MCF 10A (cell line): ENCODE measurements at regions of chr15 and their contacts with region 1.

Region 1: DNA sequence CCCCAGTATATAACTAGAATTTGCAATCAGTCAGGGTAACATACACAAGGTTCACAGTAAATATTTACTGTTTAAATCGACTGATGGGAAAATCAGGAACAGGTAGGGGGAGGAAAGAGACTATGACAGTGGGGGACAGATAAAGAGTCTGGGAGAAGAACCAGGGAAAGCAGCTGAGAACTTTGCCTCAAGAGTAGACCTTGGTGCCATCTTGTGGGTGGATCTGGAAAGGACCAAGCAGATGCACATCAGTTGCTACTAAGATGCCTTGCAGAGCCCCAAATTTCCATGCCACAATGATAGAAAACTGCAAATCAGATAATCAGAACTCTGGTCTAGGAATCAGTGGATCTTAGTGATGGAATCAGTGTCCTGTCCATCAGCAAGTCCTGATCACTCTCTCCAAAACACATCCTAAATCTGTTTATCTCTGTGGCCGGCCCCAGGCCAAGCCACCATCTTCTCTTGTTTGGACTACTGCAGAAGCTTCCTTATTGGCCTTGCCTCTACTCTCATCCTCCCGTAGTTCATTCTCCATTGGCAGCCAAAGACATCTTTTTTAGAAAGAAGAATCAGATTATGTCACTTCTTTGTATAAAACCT is 62.7 kb downstream of the PDE8A start:
- DNase-seq: peak; percentile 75
- H3K4me3 Mint-ChIP-seq: no peak overlapping the region
- H3K27ac Mint-ChIP-seq: no peak overlapping the region
- H3K4me1 Mint-ChIP-seq: peaks cover 17% of the 10 kb centered on the region
- H3K27me3 Mint-ChIP-seq: no peaks in the 10 kb centered on the region
- CTCF ChIP-seq: peak; percentile 66

Region 2: DNA sequence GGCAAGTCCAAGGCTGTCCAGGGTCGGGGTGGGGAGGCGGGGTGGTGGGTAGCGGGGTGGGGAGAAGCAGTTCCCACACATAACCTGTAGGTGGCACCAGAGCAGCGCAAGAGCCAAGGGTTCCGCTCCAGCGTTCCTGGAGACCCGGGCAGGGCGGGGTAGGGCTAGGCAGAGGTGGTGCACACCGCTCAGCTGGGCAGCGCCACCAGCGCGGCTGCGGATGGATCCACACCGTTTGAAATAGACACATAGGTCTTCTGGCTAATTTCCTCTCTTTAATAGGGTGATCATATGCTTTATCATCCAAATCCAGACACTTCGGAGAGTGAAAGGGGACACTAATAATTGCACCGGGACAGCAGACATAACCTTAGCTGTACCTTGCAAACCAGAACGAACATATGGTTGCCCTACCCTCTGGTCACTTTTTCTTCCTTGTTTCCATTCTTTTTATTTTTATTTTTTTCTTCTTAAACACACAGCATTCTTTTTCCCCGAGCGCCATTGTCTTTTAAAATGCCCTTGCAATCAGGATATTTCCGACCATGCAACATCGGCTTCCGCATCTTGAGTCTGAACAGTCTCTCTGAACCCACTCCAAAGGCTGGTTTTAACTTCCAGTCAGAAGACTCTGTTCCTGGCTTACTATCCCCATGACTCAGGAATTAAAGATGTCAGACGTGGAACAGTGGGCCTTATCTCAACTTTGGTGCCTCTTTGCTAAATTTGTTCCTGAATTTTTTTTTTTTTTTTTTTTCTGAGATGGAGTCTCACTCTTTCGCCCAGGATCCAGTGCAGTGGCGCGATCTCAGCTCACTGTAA is 456.1 kb before region 1 on chr15:
- CTCF ChIA-PET with region 1: interaction called, 4 read pairs
- POLR2A ChIA-PET with region 1: no interaction called
- intact Hi-C with region 1: loop called (anchors 5 kb)
- DNase-seq: peak; percentile 87
- H3K4me3 Mint-ChIP-seq: peak overlapping the region; percentile 59
- H3K27ac Mint-ChIP-seq: peak overlapping the region; percentile 76
- H3K4me1 Mint-ChIP-seq: peaks cover 6% of the 10 kb centered on the region
- H3K27me3 Mint-ChIP-seq: peaks cover 12% of the 10 kb centered on the region
- CTCF ChIP-seq: peak; percentile 95

Region 3: DNA sequence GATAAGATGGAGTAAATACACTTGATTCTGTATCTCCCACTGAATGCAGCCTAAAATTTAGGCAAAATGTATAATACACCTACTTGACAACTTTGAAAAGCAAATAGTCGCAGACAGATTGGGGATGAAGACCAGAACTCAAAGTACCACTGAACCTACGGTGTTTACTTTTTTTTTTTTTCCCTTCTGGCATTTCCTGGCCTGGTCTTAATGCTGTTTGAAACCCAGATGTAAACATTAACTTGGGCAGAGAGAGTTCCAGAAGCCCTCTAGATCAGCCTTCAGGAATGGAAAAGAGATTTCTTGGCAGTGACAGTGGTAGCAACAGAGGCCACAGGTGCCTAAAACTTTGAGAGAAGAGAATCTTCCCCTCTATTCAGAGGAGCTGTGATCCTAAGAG is 199.4 kb before region 1 on chr15:
- CTCF ChIA-PET with region 1: interaction called, 3 read pairs
- POLR2A ChIA-PET with region 1: no interaction called
- intact Hi-C with region 1: loop called (anchors 5 kb)
- DNase-seq: no peak
- H3K4me3 Mint-ChIP-seq: no peak overlapping the region
- H3K27ac Mint-ChIP-seq: no peak overlapping the region
- H3K4me1 Mint-ChIP-seq: no peaks in the 10 kb centered on the region
- H3K27me3 Mint-ChIP-seq: peaks cover 16% of the 10 kb centered on the region
- CTCF ChIP-seq: no peak

Region 4: GRCh38 chr15:84949845-84950569 is 94.3 kb before region 1 on chr15:
- CTCF ChIA-PET with region 1: interaction called, 50 read pairs
- POLR2A ChIA-PET with region 1: interaction called, 10 read pairs
- intact Hi-C with region 1: loop called (anchors 1 kb)
- DNase-seq: no peak
- H3K4me3 Mint-ChIP-seq: no peak overlapping the region
- H3K27ac Mint-ChIP-seq: no peak overlapping the region
- H3K4me1 Mint-ChIP-seq: peaks cover 5% of the 10 kb centered on the region
- H3K27me3 Mint-ChIP-seq: no peaks in the 10 kb centered on the region
- CTCF ChIP-seq: no peak

Region 5: DNA sequence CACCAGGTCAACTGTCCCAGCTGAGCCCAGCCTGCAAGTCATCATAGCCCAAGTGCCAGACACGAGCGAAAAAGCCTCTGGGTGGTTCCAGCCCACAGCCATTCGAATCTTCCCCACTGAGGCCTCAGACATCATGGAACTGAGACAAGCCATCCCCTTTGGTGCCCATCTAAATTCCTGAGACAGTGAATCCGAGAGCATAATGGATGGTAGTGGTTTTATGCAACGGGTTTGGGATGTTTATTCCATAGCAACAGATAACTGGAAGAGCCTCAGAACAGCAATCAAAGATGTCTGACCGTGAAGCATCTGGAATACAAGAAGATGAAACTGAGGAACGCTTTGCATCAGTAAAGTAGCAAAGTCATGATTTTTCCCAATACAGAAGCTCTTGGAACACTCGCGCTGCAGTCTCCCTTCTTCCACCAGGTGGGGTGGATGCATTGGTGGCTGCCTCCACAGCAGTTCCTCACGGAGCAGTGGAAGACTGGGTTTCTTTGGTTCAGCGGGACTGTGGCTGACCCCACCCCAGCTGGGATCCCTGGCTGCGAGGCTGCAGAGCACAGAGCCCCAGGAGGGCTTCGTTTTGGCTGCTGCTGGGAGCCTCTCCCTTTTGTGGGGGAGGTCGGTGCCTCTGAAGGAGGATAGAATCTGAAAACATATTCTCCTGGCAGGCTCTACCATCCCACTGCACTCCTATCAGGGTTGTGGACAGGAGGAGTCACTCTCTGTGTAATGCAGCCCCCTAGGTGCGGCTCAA is 89.1 kb before region 1 on chr15:
- CTCF ChIA-PET with region 1: interaction called, 50 read pairs
- POLR2A ChIA-PET with region 1: interaction called, 10 read pairs
- intact Hi-C with region 1: loop called (anchors 1 kb)
- DNase-seq: peak; percentile 73
- H3K4me3 Mint-ChIP-seq: no peak overlapping the region
- H3K27ac Mint-ChIP-seq: no peak overlapping the region
- H3K4me1 Mint-ChIP-seq: no peaks in the 10 kb centered on the region
- H3K27me3 Mint-ChIP-seq: no peaks in the 10 kb centered on the region
- CTCF ChIP-seq: peak; percentile 74

Region 6: GRCh38 chr15:84981054-84981710 is 63.2 kb before region 1 on chr15:
- CTCF ChIA-PET with region 1: interaction called, 11 read pairs
- POLR2A ChIA-PET with region 1: interaction called, 50 read pairs
- intact Hi-C with region 1: loop called (anchors 1 kb)
- DNase-seq: peak; percentile 95
- H3K4me3 Mint-ChIP-seq: peak overlapping the region; percentile 86
- H3K27ac Mint-ChIP-seq: peak overlapping the region; percentile 84
- H3K4me1 Mint-ChIP-seq: peaks cover 2% of the 10 kb centered on the region
- H3K27me3 Mint-ChIP-seq: no peaks in the 10 kb centered on the region
- CTCF ChIP-seq: peak; percentile 13

Region 7: DNA sequence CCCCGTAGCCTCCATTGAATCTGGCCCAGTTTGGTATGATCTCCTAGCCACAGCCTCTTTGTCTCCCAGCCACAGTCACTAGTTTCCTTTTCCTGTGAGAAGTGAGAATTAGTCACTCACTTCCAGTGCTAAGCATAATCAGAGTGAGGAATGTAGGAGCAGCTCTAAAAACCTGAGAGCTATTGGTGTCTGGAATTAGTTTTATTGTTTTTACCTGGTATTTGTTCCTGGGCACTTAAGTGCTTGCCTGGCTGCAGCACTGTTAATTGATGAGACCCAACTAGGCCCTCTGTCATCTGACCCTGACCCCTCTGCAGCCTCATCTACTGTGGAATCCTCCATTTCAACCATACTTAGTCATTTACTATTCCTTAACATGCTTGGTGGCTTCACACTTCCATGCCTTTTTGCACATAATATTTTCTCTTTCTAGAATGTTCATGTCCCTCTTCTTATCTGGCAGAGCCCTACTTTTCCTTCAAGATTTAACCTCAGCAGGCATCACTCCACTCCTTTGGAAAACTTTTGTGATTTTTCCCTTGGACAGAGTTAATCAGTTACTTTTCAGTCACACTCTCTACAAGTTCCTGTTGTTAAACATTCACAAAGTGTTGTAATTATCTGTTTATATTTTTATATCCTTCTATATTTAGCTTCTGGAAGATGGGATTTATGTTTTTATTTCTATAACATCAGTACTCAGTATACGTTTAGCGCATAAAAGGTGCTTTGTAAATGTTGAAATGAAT is 13.9 kb before region 1 on chr15:
- CTCF ChIA-PET with region 1: interaction called, 11 read pairs
- POLR2A ChIA-PET with region 1: interaction called, 5 read pairs
- intact Hi-C with region 1: no loop called
- DNase-seq: peak; percentile 53
- H3K4me3 Mint-ChIP-seq: no peak overlapping the region
- H3K27ac Mint-ChIP-seq: peak overlapping the region; percentile 78
- H3K4me1 Mint-ChIP-seq: peaks cover 21% of the 10 kb centered on the region
- H3K27me3 Mint-ChIP-seq: no peaks in the 10 kb centered on the region
- CTCF ChIP-seq: no peak